GM23248 (cell line): ENCODE measurements at regions of chr22 and their contacts with region 1.

Region 1: DNA sequence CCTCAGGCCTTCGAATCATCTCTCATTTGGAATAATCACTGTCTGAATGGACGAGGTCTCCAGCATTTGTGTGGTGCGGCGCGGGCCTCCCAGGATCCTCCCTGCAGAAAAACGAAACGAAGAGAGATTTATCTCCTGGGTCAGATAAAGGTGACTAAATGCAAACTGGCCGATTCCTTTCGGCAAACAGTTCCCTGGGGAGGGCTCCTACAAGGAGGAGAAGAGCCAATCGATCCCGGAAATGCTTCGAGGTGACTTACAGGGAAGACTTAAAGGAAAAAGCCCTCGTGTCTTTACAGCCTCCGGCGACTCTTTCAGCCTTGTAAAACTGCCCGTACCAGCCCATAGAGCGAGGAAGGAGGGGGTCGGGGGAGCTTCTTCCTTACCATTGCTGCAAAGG is 126.5 kb downstream of the MIAT start:
- DNase-seq: no peak
- H3K4me3 ChIP-seq: no peak overlapping the region
- H3K27ac ChIP-seq: no peak overlapping the region
- H3K4me1 ChIP-seq: no peaks in the 10 kb centered on the region
- H3K27me3 ChIP-seq: no peaks in the 10 kb centered on the region

Region 2: DNA sequence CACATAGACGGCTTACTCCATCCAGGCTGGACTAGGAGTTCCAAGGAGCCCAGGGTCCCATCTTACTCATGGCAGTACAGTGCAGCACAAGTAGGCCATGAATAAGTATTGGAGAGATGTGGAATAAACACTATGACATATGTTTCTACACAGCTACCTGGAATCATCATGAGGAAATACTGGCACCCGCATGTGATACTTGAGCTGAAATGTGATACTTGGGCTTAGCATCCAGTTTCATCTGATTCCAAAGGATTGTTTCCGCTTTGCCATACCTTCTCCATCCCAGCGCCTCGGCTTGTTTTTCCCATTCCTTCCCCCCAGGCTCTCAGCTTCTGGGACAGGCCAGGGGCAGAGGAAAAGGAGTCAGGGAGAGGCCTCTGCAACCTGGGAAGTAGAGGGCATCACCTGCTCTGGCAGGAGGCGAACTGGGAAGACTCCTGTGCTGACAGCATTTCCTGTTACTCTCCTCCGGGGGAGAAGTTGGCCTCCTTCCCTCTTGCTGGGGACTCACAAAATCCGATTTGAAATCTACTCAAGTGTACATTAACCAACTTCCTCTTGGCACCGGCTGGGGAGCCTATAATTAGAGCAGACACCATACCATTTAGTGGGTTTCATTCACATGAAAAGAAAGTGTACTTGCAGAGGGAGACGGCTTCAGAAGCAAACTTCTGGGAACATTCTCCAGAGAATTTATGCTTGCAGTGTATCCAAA is 61.3 kb after region 1 on chr22:
- in situ Hi-C with region 1: loop called (anchors 10 kb)
- DNase-seq: no peak
- H3K4me3 ChIP-seq: no peak overlapping the region
- H3K27ac ChIP-seq: no peak overlapping the region
- H3K4me1 ChIP-seq: no peaks in the 10 kb centered on the region
- H3K27me3 ChIP-seq: no peaks in the 10 kb centered on the region